AG04450 (cell line): ENCODE measurements at regions of chr10 and their contacts with region 1.

Region 1: GRCh38 chr10:5623081-5623748 is 43.2 kb downstream of the ASB13 start:
- DNase-seq: peak; percentile 46
- H3K4me3 ChIP-seq: no peak overlapping the region
- H3K27ac ChIP-seq: peak overlapping the region; percentile 31
- H3K27me3 ChIP-seq: no peaks in the 10 kb centered on the region
- CTCF ChIP-seq: peak; percentile 94

Region 2: DNA sequence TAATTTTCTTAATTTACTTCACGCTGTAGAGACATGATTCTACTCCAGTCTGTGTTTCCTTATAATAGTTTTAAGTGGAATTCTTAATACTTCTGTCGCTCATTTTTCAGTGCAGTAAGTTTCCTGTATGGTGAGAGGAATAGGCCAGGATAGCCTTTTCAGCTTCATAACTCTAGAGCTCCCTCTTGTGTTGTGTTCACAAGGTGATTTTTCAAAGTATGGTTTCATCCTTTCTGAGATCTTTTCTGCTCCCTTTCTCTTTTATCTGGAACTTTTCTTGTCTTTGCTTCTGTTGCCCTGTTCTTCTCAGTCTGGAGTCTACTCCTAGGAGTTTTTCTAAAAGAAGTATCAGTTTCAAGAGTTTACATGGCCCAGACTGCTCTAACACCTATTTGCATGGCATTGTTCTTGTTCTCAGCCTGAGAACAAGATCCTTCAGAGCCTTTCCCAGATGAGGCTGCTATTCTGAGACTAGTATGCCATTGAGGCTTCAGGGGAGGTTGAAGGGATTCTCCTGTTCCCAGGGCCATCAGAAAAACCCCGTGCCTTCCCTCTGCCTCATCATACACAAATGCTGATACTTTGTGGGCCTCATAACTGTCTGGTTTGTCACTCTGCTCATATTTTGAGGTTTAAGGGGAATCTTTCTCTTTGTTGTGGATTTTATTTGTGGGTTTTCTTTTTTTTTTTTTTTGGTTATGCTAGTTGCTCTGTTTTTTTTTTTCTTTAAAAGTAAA is 189.0 kb before region 1 on chr10:
- CTCF ChIA-PET with region 1: interaction called, 309 read pairs
- POLR2A ChIA-PET with region 1: no interaction called
- DNase-seq: no peak
- H3K4me3 ChIP-seq: no peak overlapping the region
- H3K27ac ChIP-seq: peak overlapping the region; percentile 48
- H3K27me3 ChIP-seq: no peaks in the 10 kb centered on the region
- CTCF ChIP-seq: peak; percentile 77

Region 3: DNA sequence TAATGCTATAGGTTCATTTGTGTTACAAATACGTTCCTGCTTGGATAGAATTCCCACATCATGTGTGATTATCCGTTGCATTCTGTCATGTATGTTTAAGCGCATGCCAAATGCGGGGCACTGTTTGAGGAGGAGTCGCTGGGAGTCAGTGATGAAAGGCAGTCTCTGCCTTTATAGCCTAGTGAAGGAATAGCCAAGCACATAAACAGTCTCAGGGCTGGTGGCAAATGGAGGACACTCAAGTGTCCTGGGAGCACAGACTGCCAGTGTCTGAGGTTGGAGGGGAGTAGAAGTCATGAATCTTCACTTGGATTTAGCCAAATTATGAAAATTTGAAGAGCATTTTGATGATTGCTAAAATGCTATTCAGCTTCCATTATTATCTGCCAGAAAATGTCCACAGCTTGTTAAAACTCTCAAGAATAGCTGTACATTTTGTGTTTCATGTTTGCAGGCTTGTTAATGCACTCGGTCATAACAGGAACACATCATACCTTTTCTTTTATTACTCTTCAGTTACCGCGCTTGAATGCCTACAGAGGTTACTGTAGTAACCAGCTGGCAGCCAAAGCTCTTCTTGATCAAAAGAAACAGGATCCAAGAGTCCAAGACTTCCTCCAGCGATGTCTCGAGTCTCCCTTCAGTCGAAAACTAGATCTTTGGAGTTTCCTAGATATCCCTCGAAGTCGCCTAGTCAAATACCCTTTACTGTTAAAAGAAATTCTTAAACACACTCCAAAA is 169.3 kb before region 1 on chr10:
- CTCF ChIA-PET with region 1: interaction called, 309 read pairs
- POLR2A ChIA-PET with region 1: no interaction called
- DNase-seq: no peak
- H3K4me3 ChIP-seq: no peak overlapping the region
- H3K27ac ChIP-seq: no peak overlapping the region
- H3K27me3 ChIP-seq: no peaks in the 10 kb centered on the region
- CTCF ChIP-seq: no peak

Region 4: DNA sequence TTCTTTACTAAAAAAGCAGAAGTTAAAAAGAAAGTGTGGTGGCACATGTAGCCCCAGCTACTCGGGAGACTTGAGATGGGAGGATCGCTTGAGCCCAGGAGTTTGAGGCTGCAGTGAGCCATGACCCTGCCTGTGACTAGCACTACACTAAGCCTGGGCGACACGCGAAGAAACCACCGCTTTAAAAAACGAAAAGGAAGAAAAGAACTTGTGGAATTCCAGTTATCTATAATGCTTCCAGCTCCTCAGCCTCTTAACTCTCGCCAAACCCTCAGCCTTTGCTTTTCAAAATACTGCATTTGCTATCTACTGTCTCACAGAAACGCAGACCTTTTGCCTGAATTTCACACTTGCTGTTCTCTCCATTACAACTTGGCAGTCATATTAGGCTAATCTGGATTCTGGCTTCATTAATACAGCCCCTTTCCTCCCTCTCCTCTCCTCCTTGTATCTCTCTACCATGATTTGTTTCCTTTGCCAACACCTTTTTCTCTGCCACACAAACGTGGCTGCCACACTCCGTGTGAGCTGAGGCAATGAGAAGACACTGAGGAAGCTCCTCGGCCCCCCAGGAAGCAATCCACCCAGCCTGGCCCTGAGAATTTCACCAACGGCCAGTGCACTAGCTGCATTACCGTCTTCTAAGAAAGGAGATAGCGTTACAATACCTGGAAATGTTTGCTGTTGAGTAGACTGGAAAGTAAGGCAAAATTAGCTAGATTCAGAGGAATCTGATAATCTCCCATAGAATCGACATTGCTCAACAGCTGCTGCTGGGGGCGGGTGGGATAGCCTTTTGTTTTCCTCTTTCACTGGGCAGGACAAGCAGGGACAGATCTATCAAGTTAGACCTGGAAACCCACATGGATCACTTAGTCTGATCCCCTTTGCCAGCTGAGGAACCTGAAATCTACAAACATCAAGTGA is 161.0 kb before region 1 on chr10:
- CTCF ChIA-PET with region 1: interaction called, 13 read pairs
- POLR2A ChIA-PET with region 1: interaction called, 5 read pairs
- DNase-seq: no peak
- H3K4me3 ChIP-seq: no peak overlapping the region
- H3K27ac ChIP-seq: no peak overlapping the region
- H3K27me3 ChIP-seq: no peaks in the 10 kb centered on the region
- CTCF ChIP-seq: no peak

Region 5: GRCh38 chr10:5809527-5810154 is 186.4 kb after region 1 on chr10:
- CTCF ChIA-PET with region 1: no interaction called
- POLR2A ChIA-PET with region 1: no interaction called
- DNase-seq: no peak
- H3K4me3 ChIP-seq: peak overlapping the region; percentile 29; the same call in 1 of the 2 replicates
- H3K27ac ChIP-seq: no peak overlapping the region
- H3K27me3 ChIP-seq: no peaks in the 10 kb centered on the region
- CTCF ChIP-seq: no peak